MCF 10A (cell line): ENCODE measurements at regions of chr1 and their contacts with region 1.

Region 1: DNA sequence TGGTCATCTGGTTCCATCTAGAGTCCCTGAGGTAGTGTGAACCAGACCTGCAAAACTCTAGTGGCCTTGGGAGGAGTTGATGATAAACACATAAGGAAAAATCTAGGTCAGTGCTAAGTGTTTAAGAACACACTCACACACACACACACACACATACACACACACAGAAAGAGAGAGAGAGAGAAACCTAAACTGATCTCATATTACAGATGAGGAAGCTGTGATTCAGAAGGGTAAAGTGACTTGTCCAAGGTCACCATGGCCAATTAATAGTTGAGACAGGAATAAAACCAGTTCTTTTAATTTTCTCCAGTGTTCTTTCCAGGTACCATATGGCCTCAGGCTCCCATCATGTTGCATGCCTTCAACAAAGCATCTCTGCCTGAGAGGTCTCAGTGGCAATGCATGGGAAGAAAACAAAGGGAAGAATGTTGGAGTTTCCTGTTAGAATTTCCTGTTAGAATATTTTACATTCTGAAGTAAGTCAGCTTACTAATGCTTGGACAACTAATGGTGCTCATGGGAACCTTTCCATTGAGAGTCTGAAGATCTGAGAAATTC is 77.3 kb upstream of the TSPAN2 start:
- DNase-seq: no peak
- H3K4me3 Mint-ChIP-seq: no peak overlapping the region
- H3K27ac Mint-ChIP-seq: no peak overlapping the region
- H3K4me1 Mint-ChIP-seq: peaks cover 44% of the 10 kb centered on the region
- H3K27me3 Mint-ChIP-seq: no peaks in the 10 kb centered on the region
- CTCF ChIP-seq: no peak

Region 2: GRCh38 chr1:115184951-115185331 is 18.3 kb after region 1 on chr1:
- CTCF ChIA-PET with region 1: no interaction called
- POLR2A ChIA-PET with region 1: interaction called, 10 read pairs
- intact Hi-C with region 1: loop called (anchors 2 kb)
- DNase-seq: peak; percentile 80
- H3K4me3 Mint-ChIP-seq: peak overlapping the region; percentile 53
- H3K27ac Mint-ChIP-seq: peak overlapping the region; percentile 89
- H3K4me1 Mint-ChIP-seq: peaks cover 23% of the 10 kb centered on the region
- H3K27me3 Mint-ChIP-seq: no peaks in the 10 kb centered on the region
- CTCF ChIP-seq: no peak

Region 3: DNA sequence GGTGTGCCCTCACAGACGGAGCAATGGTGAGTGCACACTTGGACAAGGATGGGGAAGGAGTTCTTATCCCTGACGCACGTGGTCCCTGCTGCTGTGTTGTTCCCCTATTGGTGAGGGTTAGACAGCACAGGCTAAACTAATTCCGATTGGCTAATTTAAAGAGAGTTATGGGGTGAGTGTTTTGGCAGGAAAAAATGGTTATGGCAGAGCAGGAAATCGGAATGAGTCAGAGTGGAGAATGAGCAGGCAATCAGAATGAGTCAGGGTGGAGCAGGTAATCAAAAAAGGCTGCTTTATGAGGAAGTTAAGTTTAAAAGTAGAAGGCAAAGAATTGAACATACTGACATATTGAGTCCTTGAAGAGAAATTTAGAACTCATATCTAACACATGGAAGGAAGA is 70.9 kb after region 1 on chr1:
- CTCF ChIA-PET with region 1: no interaction called
- POLR2A ChIA-PET with region 1: no interaction called
- intact Hi-C with region 1: no loop called
- DNase-seq: no peak
- H3K4me3 Mint-ChIP-seq: no peak overlapping the region
- H3K27ac Mint-ChIP-seq: no peak overlapping the region
- H3K4me1 Mint-ChIP-seq: no peaks in the 10 kb centered on the region
- H3K27me3 Mint-ChIP-seq: no peaks in the 10 kb centered on the region
- CTCF ChIP-seq: no peak

Region 4: DNA sequence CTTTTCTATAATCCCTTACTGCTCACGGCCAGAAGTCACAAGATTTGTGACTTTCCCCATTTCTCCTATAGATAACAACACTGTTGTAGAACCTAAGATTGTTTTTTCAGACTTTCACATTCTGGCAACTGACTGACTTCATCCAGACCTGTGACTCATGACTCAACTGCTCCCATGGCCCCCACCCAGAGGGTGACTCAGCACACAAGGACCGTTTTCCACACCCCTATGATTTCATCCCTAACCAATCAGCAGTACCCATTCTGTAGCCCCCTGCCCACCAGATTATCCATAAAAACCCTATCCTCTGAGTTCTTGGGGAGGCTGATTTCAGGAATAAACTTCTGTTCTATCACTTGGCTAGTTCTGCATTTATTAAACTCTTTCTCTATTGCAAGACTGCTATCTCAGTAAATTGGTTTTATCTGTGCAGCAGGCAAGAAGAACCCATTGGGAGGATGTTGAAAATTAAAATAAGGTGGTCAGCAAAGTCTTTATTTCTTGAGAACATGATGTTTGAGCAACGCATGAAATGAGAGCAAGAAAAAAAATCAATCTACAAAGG is 91.8 kb after region 1 on chr1:
- CTCF ChIA-PET with region 1: no interaction called
- POLR2A ChIA-PET with region 1: no interaction called
- intact Hi-C with region 1: loop called (anchors 5 kb)
- DNase-seq: peak; percentile 43
- H3K4me3 Mint-ChIP-seq: no peak overlapping the region
- H3K27ac Mint-ChIP-seq: no peak overlapping the region
- H3K4me1 Mint-ChIP-seq: peaks cover 8% of the 10 kb centered on the region
- H3K27me3 Mint-ChIP-seq: no peaks in the 10 kb centered on the region
- CTCF ChIP-seq: no peak

Region 5: GRCh38 chr1:115332813-115333608 is 166.4 kb after region 1 on chr1:
- CTCF ChIA-PET with region 1: no interaction called
- POLR2A ChIA-PET with region 1: interaction called, 4 read pairs
- intact Hi-C with region 1: loop called (anchors 2 kb)
- DNase-seq: peak; percentile 90
- H3K4me3 Mint-ChIP-seq: peak overlapping the region; percentile 19
- H3K27ac Mint-ChIP-seq: peak overlapping the region; percentile 98
- H3K4me1 Mint-ChIP-seq: peaks cover 23% of the 10 kb centered on the region
- H3K27me3 Mint-ChIP-seq: no peaks in the 10 kb centered on the region
- CTCF ChIP-seq: no peak